ENCODE measurements at regions of chr1 and their contacts with region 1.

Region 1: DNA sequence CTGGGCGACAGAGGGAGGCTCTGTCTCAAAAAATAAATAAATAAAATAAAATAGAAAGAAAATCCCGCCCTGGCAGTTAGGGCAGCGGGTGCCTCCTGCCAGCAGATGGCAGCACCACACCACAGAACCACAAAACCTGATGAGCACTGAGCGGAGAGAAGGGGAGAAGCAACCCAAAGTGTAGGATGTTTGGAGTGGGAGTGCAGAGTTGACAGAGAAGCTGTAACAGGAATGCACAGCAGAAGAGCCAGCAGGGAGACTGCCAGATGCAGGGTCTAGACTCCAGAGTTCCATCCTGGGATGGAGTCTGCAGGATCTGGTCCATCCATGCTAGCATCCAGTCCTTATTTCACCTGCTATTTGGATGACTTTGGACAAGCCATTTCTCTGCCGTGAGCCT is 29.7 kb upstream of the KIRREL1 start:
- DNase-seq: peak; percentile 61 to 68
- ATAC-seq: peak; percentile 67 to 87
- H3K4me3 ChIP-seq: no peak overlapping the region
- H3K27ac ChIP-seq: peak overlapping the region in 1 of 2 experiments; percentile 40; a peak in 2 of 6 replicates
- H3K4me1 ChIP-seq: peaks cover 46% of the 10 kb centered on the region
- CTCF ChIP-seq: peak; percentile 96
- EP300 ChIP-seq: no peak
- POLR2A ChIP-seq: no peak
- RAD21 ChIP-seq: peak; percentile 97 to 98

Region 2: GRCh38 chr1:157948312-157949073 is 15.2 kb before region 1 on chr1:
- CTCF ChIA-PET with region 1: interaction called, 52 read pairs
- POLR2A ChIA-PET with region 1: no interaction called
- DNase-seq: peak in 1 of 2 experiments; percentile 53
- ATAC-seq: peak; percentile 87 to 89
- H3K4me3 ChIP-seq: no peak overlapping the region
- H3K27ac ChIP-seq: no peak overlapping the region
- H3K4me1 ChIP-seq: no peaks in the 10 kb centered on the region
- CTCF ChIP-seq: peak; percentile 47
- EP300 ChIP-seq: no peak
- POLR2A ChIP-seq: no peak
- RAD21 ChIP-seq: peak; percentile 57 to 78

Region 3: DNA sequence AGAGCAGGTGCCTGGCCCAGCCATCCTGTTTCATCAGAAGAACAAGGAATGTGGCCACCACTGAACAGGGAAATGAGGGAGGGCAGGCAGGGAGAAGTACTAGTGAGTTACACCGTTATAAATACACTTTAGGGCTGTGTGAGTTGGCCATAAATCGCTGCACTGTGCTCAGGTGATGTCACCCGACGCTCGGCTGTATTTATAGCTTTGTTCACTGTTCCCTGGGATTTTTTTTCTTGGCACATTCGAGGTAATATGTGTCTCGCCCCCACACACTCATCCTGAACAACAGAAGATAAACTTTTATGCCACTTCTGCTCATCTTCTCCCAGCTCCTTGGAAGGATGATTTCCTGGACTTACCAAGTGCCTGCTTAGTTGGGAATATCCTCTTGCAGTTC is 20.8 kb after region 1 on chr1:
- CTCF ChIA-PET with region 1: interaction called, 139 read pairs
- POLR2A ChIA-PET with region 1: no interaction called
- DNase-seq: no peak
- ATAC-seq: no peak
- H3K4me3 ChIP-seq: no peak overlapping the region
- H3K27ac ChIP-seq: no peak overlapping the region
- H3K4me1 ChIP-seq: no peaks in the 10 kb centered on the region
- CTCF ChIP-seq: no peak
- EP300 ChIP-seq: no peak
- POLR2A ChIP-seq: no peak
- RAD21 ChIP-seq: no peak

Region 4: GRCh38 chr1:158035976-158036583 is 72.4 kb after region 1 on chr1:
- CTCF ChIA-PET with region 1: interaction called, 10 read pairs
- POLR2A ChIA-PET with region 1: no interaction called
- DNase-seq: peak in 1 of 2 experiments; percentile 72
- ATAC-seq: peak; percentile 23 to 57; a peak in 3 of 6 replicates
- H3K4me3 ChIP-seq: no peak overlapping the region
- H3K27ac ChIP-seq: peak overlapping the region; percentile 66 to 84; a peak in 5 of 6 replicates
- H3K4me1 ChIP-seq: peaks cover 36% of the 10 kb centered on the region
- CTCF ChIP-seq: peak; percentile 88
- EP300 ChIP-seq: no peak
- POLR2A ChIP-seq: no peak
- RAD21 ChIP-seq: peak; percentile 81 to 84

Region 5: GRCh38 chr1:158087320-158087927 is 123.7 kb after region 1 on chr1:
- CTCF ChIA-PET with region 1: interaction called, 2,212 read pairs
- POLR2A ChIA-PET with region 1: no interaction called
- DNase-seq: peak; percentile 84 to 86
- ATAC-seq: peak; percentile 89 to 95
- H3K4me3 ChIP-seq: no peak overlapping the region
- H3K27ac ChIP-seq: 0 out of 6 replicates have a peak overlapping the region, but pooled peaks of 1 of the 2 experiments have one; percentile 22
- H3K4me1 ChIP-seq: no peaks in the 10 kb centered on the region
- CTCF ChIP-seq: peak; percentile 99
- EP300 ChIP-seq: no peak
- POLR2A ChIP-seq: no peak
- RAD21 ChIP-seq: peak; percentile 93 to 95

Region 6: DNA sequence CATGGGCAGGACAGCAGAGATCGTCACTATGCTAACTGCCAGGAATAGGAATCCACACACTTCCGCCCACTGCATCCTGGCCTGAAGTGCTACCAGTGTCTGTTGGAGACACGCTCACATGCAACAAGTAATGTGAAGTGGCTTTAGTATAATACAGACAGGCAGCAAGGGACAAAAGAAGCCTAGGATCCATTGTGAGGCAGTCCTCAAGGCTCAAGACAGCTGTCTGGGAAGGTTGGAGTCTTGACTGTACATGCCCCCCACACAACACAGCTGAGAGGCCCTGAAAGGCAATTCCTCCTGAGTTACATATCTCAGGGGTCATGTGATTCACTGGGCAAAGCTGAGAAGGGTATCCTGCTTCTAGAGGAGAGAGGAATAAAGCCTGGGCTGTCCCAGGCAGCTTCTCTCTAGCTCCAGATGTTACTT is 177.1 kb after region 1 on chr1:
- CTCF ChIA-PET with region 1: interaction called, 2,212 read pairs
- POLR2A ChIA-PET with region 1: no interaction called
- DNase-seq: no peak
- ATAC-seq: no peak
- H3K4me3 ChIP-seq: no peak overlapping the region
- H3K27ac ChIP-seq: no peak overlapping the region
- H3K4me1 ChIP-seq: 0 out of 3 replicates have a peak, but pooled peaks cover 8% of the 10 kb centered on the region
- CTCF ChIP-seq: no peak
- EP300 ChIP-seq: no peak
- POLR2A ChIP-seq: no peak
- RAD21 ChIP-seq: no peak

Measured in A549 (cell line).